Activated CD4-positive, alpha-beta T cell treated with anti-CD3 and anti-CD28 coated beads, Interleukin-2, amount 10 ng/mL, durations not matched to agents 24 days and 14 days (primary cell): ENCODE measurements at regions of chr3 and their contacts with region 1.

Region 1: DNA sequence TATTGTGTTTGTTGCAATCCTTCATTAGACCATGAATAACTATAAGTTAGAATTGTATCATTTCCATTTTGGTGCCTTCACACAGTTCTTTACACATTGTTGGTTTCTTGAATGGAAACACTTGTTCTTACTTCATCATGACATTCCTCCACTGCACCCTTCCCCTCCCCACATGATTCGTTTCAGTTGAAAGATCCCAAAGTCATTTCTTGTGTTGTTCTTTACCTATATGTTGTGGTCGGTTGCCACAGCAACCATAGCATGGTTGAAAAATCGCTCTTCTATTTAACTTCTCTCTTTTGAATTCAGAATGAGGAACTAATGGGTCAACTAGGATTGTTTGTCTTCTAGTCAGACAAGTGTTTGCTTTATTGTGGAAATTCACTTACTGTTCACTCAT is 103.3 kb downstream of the IL1RAP start:
- DNase-seq: peak; percentile 88
- H3K4me3 Mint-ChIP-seq: peak overlapping the region; percentile 56
- H3K27ac Mint-ChIP-seq: peak overlapping the region; percentile 91
- H3K4me1 Mint-ChIP-seq: peaks cover 69% of the 10 kb centered on the region
- H3K27me3 Mint-ChIP-seq: no peaks in the 10 kb centered on the region

Region 2: GRCh38 chr3:190321789-190322603 is 295.2 kb before region 1 on chr3 and contains the start of gene CLDN1:
- intact Hi-C with region 1: loop called (anchors 10 kb)
- DNase-seq: peak; percentile 93
- H3K4me3 Mint-ChIP-seq: peak within 1 kb of the TSS; percentile 75
- H3K27ac Mint-ChIP-seq: no peak within 1 kb of the TSS
- H3K4me1 Mint-ChIP-seq: peaks cover 31% of the 10 kb centered on the region
- H3K27me3 Mint-ChIP-seq: peaks cover 22% of the 10 kb centered on the region
- total RNA-seq, gene CLDN1: 0.33 and 0.52 TPM in 2 replicates

Region 3: GRCh38 chr3:190339130-190339529 is 278.1 kb before region 1 on chr3:
- intact Hi-C with region 1: no loop called
- DNase-seq: no peak
- H3K4me3 Mint-ChIP-seq: no peak overlapping the region
- H3K27ac Mint-ChIP-seq: no peak overlapping the region
- H3K4me1 Mint-ChIP-seq: no peaks in the 10 kb centered on the region
- H3K27me3 Mint-ChIP-seq: peaks cover 4% of the 10 kb centered on the region

Region 4: DNA sequence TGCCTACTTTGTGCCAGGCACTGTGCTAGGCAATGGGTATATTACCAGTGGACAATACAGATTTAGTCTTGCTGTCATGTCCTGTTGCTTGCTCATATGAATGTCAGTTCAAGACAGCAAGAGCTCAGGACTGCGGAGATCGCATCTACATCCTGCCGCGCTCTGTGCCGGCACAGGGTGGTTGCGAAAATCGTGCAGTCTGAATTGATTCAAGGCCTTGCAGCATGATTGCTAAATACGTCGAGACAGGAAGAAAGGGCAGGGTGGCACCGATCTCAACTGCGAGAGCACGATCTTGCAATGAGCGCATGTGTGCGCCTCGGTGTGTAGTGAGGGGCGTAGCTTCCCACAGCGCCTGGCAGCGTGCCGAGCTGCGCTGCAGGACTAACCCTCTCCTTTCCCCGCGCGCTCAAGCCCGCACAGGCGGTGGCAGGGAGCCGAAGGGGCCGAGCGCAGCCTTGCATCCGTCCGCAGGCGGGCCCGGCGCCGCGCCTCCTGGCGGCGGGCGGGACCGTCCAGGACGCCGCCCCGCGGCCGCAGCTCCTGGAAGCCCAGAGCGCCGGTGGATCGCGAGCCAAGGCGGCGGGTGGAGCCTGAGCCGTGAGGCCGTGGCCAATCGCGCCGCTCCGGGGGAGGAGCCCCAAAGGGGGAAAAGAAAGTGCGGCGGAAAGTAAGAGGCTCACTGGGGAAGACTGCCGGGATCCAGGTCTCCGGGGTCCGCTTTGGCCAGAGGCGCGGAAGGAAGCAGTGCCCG is 103.6 kb before region 1 on chr3 and contains the start of gene IL1RAP:
- intact Hi-C with region 1: loop called (anchors 1 kb)
- DNase-seq: peak; percentile 97
- H3K4me3 Mint-ChIP-seq: peak within 1 kb of the TSS; percentile 90
- H3K27ac Mint-ChIP-seq: peak within 1 kb of the TSS; percentile 93
- H3K4me1 Mint-ChIP-seq: peaks cover 34% of the 10 kb centered on the region
- H3K27me3 Mint-ChIP-seq: peaks cover 3% of the 10 kb centered on the region
- total RNA-seq, gene IL1RAP: 24.8 and 27.8 TPM in 2 replicates

Region 5: DNA sequence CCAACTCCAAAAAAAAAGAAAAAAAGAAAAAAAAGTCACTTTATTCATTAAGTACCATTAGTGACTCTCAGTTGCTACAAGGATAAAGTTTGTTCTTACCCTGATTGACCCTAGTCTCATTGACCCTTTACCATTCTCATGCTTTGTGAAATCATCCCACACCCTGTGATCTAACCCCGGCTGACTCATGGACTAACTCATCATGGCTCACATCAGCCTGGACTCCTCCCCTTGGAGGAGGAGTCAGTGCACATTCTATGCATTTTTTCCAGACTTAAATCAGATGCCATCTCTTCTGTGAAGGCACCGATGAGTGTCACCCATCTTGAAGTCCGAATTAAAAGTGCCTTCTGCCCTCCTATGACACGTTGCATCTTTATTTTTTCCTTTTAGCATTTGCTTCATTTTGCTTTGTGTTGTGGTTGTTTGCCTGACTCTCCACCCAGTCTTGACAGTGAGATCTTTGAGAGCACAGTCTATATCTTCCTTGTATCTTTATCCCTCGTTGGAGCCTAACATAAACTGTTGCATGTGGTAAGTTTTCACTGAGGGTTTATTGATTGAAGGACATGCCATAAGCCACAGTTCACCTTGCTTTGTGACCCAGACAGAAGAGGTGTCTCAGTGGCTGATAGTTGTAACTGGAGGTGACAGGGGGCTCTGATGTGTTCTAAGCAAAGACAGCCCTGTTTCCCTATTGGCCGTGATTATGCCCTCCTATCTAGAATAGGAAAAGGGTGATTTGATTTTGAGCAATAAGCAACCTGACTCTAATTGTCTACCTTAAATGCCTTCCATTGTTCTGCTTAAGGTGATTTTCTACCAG is 31.2 kb before region 1 on chr3:
- intact Hi-C with region 1: loop called (anchors 1 kb)
- DNase-seq: peak; percentile 85
- H3K4me3 Mint-ChIP-seq: peak overlapping the region; percentile 65
- H3K27ac Mint-ChIP-seq: peak overlapping the region; percentile 94
- H3K4me1 Mint-ChIP-seq: peaks cover 45% of the 10 kb centered on the region
- H3K27me3 Mint-ChIP-seq: no peaks in the 10 kb centered on the region